ENCODE measurements at regions of chr3 and their contacts with region 1.

Region 1: DNA sequence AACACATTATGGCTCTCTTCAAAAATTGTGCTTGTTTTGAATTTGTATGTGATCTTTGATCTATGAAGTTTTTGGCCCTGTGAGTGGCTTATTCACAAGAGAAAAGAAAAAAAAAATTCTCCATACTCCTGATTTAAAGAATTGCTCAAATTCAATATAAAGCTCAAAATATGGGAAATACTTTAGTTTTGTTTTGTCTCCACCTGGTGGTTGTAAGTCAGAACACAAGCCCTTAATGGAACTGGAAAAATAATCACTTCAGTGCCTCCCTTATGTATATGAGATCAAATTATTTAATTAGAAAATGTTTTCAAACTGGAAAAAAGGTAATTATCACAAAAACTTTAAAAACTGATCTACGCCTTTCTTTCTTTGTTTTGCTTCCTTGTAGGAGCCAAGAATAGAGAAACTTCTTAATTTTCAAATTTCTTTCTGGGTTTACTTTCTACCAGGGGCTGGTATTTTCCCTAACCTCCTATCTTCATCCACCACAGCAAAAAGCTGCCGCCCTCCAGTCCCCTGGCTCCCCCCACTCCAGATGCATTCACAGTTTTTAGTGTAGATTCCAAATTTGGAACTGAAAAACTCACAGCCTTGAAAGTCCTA is 50.6 kb downstream of the SERP1 start:
- DNase-seq: no peak
- ATAC-seq: peak in 2 of 8 donors; percentile 37 to 38
- H3K4me3 ChIP-seq: no peak overlapping the region
- H3K27ac ChIP-seq: no peak overlapping the region
- H3K4me1 ChIP-seq: peaks cover 0 to 10% (median 0%) of the 10 kb centered on the region in 9 donors
- H3K27me3 ChIP-seq: no peaks in the 10 kb centered on the region
- CTCF ChIP-seq: peak; percentile 60 to 90 (median 81)

Region 2: GRCh38 chr3:149936812-149937233 is 558.8 kb before region 1 on chr3:
- intact Hi-C with region 1: loop called in 1 of 10 experiments (anchors 5 kb)
- DNase-seq: peak; percentile 22 to 30
- ATAC-seq: peak; percentile 56 to 82 (median 77)
- H3K4me3 ChIP-seq: peak overlapping the region in 1 of 10 donors; percentile 5
- H3K27ac ChIP-seq: no peak overlapping the region
- H3K4me1 ChIP-seq: peaks cover 0 to 25% (median 7%) of the 10 kb centered on the region in 9 donors
- H3K27me3 ChIP-seq: no peaks in the 10 kb centered on the region
- CTCF ChIP-seq: peak; percentile 51 to 87 (median 75)

Region 3: DNA sequence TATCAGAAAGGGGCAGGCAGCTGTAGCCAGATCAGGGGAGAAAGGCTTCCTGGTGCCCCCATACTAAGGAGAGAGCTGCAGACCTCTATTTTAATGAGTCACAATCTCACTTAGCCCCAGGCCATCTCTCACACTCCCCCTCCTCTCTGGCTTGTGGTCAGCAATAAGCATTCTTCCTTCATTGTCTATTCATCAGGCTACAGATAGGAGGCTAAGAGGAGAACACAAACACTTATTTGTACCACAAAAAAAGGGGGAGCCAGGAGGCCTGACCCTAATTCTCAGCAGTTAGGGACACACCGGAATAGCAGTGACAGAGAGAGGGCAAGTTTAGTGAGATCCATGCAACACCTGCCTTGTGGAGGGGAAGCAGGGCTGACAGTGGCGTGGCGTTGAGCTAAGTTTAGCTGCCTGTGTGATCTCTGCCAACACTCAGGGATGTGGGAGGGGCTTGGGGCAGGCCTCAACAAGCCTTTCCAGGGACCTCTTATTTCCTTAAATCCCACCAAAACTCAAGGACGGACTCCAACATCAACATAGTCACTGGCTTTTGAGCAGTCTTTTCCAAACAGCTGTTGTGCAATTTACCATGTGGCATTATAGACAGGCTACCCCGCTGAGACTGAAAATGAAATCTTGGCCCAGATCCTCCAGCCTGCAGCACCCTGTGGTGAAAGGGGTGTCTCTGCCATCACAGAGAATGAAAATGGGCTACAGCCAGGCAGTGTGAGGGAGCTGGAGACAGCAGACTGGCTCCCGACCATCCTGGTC is 279.4 kb before region 1 on chr3:
- intact Hi-C with region 1: loop called in 2 of 10 experiments (anchors 5 to 10 kb)
- DNase-seq: peak; percentile 41 to 70
- ATAC-seq: peak; percentile 83 to 97 (median 92)
- H3K4me3 ChIP-seq: no peak overlapping the region
- H3K27ac ChIP-seq: peak overlapping the region in 8 of 10 donors; percentile 14 to 68 (median 44)
- H3K4me1 ChIP-seq: peaks cover 0 to 24% (median 17%) of the 10 kb centered on the region in 9 donors
- H3K27me3 ChIP-seq: peaks cover 0 to 6% (median 0%) of the 10 kb centered on the region in 7 donors
- CTCF ChIP-seq: no peak

Region 4: GRCh38 chr3:150238998-150239619 is 256.6 kb before region 1 on chr3:
- intact Hi-C with region 1: loop called in 2 of 10 experiments (anchors 5 to 10 kb)
- DNase-seq: no peak
- ATAC-seq: peak in 3 of 8 donors; percentile 18 to 60 (median 20)
- H3K4me3 ChIP-seq: no peak overlapping the region
- H3K27ac ChIP-seq: no peak overlapping the region
- H3K4me1 ChIP-seq: peaks cover 0 to 37% (median 11%) of the 10 kb centered on the region in 9 donors
- H3K27me3 ChIP-seq: no peaks in the 10 kb centered on the region
- CTCF ChIP-seq: peak in 7 of 9 donors; percentile 14 to 53 (median 46)

Region 5: DNA sequence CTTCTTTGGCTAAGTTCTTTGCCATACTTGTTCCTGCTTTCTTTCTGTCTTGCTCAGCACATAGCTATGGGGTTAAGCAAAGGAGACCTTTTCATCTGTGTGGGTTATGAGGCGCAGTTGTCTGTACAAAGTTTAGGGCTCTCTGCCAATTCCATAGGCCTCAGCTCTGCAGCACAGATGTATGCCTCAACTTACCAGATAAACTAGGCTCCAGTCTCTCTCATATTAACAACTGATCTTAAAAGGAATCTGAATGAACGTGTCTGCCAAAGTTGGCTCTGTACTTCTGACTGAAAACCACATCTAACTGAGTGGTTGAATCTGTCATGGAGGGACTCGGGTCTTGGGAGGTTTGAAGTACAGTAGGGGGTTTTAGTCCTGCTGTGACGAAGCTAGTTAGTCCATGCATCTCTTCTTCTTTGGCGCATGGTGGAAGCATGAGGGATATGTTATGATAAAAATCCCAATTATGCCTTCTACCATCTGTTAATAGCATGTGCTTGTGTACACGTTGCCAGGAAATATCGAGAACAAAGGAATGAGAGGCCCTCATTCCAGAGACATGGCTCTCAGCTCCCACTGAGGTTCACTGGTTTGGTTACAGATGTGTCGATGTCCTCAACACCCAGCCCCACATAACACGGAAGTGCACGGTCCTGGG is 202.1 kb before region 1 on chr3:
- intact Hi-C with region 1: loop called in 4 of 10 experiments (anchors 5 kb)
- DNase-seq: no peak
- ATAC-seq: no peak
- H3K4me3 ChIP-seq: no peak overlapping the region
- H3K27ac ChIP-seq: no peak overlapping the region
- H3K4me1 ChIP-seq: peaks cover 0 to 5% (median 0%) of the 10 kb centered on the region in 9 donors
- H3K27me3 ChIP-seq: no peaks in the 10 kb centered on the region
- CTCF ChIP-seq: no peak

Region 6: GRCh38 chr3:150348500-150348899 is 147.2 kb before region 1 on chr3:
- intact Hi-C with region 1: no loop called
- DNase-seq: no peak
- ATAC-seq: peak; percentile 48 to 92 (median 84)
- H3K4me3 ChIP-seq: no peak overlapping the region
- H3K27ac ChIP-seq: peak overlapping the region; percentile 15 to 90 (median 68)
- H3K4me1 ChIP-seq: peaks cover 3 to 38% (median 23%) of the 10 kb centered on the region in 9 donors
- H3K27me3 ChIP-seq: no peaks in the 10 kb centered on the region
- CTCF ChIP-seq: no peak